ENCODE measurements at regions of chr11 and their contacts with region 1.

Region 1: DNA sequence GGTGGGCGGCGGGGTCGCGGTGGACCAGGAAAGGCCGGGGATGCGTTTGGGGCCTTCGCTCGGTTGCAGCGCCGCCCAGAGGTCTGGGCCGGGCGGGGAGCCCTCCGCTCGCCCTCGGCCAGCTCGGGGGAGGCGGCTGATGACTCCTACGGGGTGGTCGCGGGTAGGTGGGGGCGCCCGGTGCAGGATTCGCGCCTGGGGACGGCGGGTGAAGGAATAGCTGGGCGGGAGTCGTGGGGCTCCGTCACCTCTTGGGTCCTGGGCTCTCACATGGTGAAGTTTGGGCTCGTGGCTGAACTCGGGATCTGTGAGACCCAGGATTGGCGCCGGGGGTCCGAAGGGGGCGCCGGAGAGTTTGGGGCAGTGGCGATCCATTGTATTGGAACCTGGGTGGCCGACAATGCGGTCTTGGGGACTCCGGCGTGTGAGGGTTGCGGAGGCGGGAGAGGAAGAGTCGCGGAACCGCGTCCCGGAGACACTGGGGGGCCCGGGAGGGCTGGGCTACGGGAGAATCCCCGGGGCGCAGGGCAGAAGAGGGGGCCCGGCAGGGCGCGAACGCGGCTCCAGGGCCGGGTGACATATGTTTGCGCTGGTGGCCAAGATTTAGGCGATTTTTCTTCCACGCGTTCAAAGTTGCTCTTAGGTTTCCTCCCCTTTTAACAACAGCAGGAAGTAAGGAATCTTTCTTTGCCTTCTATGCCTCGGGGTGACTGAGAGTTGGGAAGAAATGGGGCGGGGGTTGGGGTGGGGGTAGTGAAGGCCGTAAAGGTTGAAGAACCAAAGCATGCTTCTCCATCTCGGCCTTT is 935 bp downstream of the QSER1 start:
- DNase-seq: no peak
- ATAC-seq: peak; percentile 59
- H3K4me3 ChIP-seq: peak overlapping the region; percentile 91
- H3K27ac ChIP-seq: peak overlapping the region; percentile 87
- H3K4me1 ChIP-seq: peaks cover 7% of the 10 kb centered on the region; the same call in 1 of the 2 replicates
- H3K27me3 ChIP-seq: no peaks in the 10 kb centered on the region
- CTCF ChIP-seq: peak; percentile 43 to 49 (median 45)
- EP300 ChIP-seq: no peak
- POLR2A ChIP-seq: peak; percentile 71; the same call in 1 of the 2 replicates
- RAD21 ChIP-seq: peak; percentile 16; the same call in 1 of the 2 replicates

Region 2: GRCh38 chr11:32658639-32659406 is 234.7 kb before region 1 on chr11:
- CTCF ChIA-PET with region 1: no interaction called
- POLR2A ChIA-PET with region 1: no interaction called
- RAD21 ChIA-PET with region 1: no interaction called
- SMC1A ChIA-PET with region 1: no interaction called
- in situ Hi-C with region 1: no loop called
- intact Hi-C with region 1: no loop called
- DNase-seq: no peak
- ATAC-seq: no peak
- H3K4me3 ChIP-seq: no peak overlapping the region
- H3K27ac ChIP-seq: no peak overlapping the region
- H3K4me1 ChIP-seq: no peaks in the 10 kb centered on the region
- H3K27me3 ChIP-seq: no peaks in the 10 kb centered on the region
- CTCF ChIP-seq: no peak
- EP300 ChIP-seq: no peak
- POLR2A ChIP-seq: no peak
- RAD21 ChIP-seq: no peak

Region 3: GRCh38 chr11:32809313-32809712 is 84.2 kb before region 1 on chr11:
- CTCF ChIA-PET with region 1: interaction called, 41 read pairs
- POLR2A ChIA-PET with region 1: interaction called, 3 read pairs
- RAD21 ChIA-PET with region 1: interaction called, 12 read pairs
- SMC1A ChIA-PET with region 1: interaction called, 19 read pairs
- in situ Hi-C with region 1: no loop called
- intact Hi-C with region 1: no loop called
- DNase-seq: no peak
- ATAC-seq: peak; percentile 100
- H3K4me3 ChIP-seq: no peak overlapping the region
- H3K27ac ChIP-seq: no peak overlapping the region
- H3K4me1 ChIP-seq: no peaks in the 10 kb centered on the region
- H3K27me3 ChIP-seq: no peaks in the 10 kb centered on the region
- CTCF ChIP-seq: peak; percentile 85 to 86 (median 86)
- EP300 ChIP-seq: no peak
- POLR2A ChIP-seq: no peak
- RAD21 ChIP-seq: peak; percentile 83

Region 4: GRCh38 chr11:32829680-32830412 is 63.7 kb before region 1 on chr11 and contains the start of gene PRRG4:
- CTCF ChIA-PET with region 1: interaction called, 3 read pairs
- POLR2A ChIA-PET with region 1: interaction called, 5 read pairs
- RAD21 ChIA-PET with region 1: interaction called, 7 read pairs
- SMC1A ChIA-PET with region 1: interaction called, 5 read pairs
- in situ Hi-C with region 1: no loop called
- intact Hi-C with region 1: loop called (anchors 5 kb)
- DNase-seq: no peak
- ATAC-seq: peak; percentile 90
- H3K4me3 ChIP-seq: peak within 1 kb of the TSS; percentile 84
- H3K27ac ChIP-seq: peak within 1 kb of the TSS; percentile 76
- H3K4me1 ChIP-seq: no peaks in the 10 kb centered on the region; the same call in 1 of the 2 replicates
- H3K27me3 ChIP-seq: no peaks in the 10 kb centered on the region; a peak in 1 of 4 replicates
- CTCF ChIP-seq: no peak
- EP300 ChIP-seq: no peak
- POLR2A ChIP-seq: peak; percentile 72
- RAD21 ChIP-seq: no peak
- polyA plus RNA-seq, gene PRRG4: 1.0 to 1.1 TPM

Region 5: DNA sequence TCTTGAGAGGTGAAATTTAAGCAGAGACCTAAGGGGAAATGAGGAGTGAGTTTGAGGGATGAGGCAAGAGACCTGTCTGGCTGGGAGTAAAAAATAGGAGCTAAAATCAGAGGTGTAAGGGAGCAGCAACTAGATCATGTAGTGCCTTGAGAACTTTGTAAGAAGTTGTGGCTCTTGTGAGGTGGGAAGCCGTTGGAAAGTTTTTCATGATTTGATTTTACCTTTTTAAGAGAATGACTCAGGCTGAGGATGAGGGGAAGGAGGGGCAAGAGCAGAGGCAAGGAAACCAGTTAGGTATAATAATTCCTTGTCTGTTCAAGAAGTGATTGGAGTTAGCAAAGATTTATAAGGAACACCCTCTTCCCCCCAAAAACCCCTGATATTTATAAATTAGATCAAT is 24.9 kb after region 1 on chr11:
- CTCF ChIA-PET with region 1: interaction called, 5 read pairs
- POLR2A ChIA-PET with region 1: interaction called, 4 read pairs
- RAD21 ChIA-PET with region 1: no interaction called
- SMC1A ChIA-PET with region 1: no interaction called
- in situ Hi-C with region 1: no loop called
- intact Hi-C with region 1: loop called (anchors 2 kb)
- DNase-seq: no peak
- ATAC-seq: no peak
- H3K4me3 ChIP-seq: no peak overlapping the region
- H3K27ac ChIP-seq: no peak overlapping the region
- H3K4me1 ChIP-seq: no peaks in the 10 kb centered on the region
- H3K27me3 ChIP-seq: no peaks in the 10 kb centered on the region
- CTCF ChIP-seq: no peak
- EP300 ChIP-seq: no peak
- POLR2A ChIP-seq: no peak
- RAD21 ChIP-seq: no peak

Region 6: DNA sequence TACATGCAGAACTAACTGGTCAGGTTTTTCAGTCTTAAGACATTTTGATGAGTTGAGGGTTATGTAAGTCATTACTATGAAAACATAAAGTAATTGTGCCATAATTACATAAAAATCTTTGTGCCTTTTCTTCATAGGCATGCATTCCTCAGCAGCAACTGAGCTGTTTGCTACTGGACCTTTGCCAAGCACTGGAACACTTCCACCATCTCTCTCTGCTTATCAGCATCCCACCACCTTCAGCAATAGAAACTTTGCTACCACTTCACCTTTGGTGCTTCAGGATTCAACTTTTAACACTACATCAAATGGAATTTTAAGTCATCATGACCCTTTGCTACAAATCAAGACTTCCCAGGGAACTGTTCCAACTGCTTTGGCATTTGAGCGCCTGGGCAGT is 38.1 kb after region 1 on chr11:
- CTCF ChIA-PET with region 1: interaction called, 4 read pairs
- POLR2A ChIA-PET with region 1: interaction called, 3 read pairs
- RAD21 ChIA-PET with region 1: interaction called, 3 read pairs
- SMC1A ChIA-PET with region 1: interaction called, 21 read pairs
- in situ Hi-C with region 1: no loop called
- intact Hi-C with region 1: no loop called
- DNase-seq: no peak
- ATAC-seq: no peak
- H3K4me3 ChIP-seq: no peak overlapping the region
- H3K27ac ChIP-seq: no peak overlapping the region
- H3K4me1 ChIP-seq: no peaks in the 10 kb centered on the region
- H3K27me3 ChIP-seq: no peaks in the 10 kb centered on the region
- CTCF ChIP-seq: no peak
- EP300 ChIP-seq: no peak
- POLR2A ChIP-seq: no peak
- RAD21 ChIP-seq: no peak

Region 7: DNA sequence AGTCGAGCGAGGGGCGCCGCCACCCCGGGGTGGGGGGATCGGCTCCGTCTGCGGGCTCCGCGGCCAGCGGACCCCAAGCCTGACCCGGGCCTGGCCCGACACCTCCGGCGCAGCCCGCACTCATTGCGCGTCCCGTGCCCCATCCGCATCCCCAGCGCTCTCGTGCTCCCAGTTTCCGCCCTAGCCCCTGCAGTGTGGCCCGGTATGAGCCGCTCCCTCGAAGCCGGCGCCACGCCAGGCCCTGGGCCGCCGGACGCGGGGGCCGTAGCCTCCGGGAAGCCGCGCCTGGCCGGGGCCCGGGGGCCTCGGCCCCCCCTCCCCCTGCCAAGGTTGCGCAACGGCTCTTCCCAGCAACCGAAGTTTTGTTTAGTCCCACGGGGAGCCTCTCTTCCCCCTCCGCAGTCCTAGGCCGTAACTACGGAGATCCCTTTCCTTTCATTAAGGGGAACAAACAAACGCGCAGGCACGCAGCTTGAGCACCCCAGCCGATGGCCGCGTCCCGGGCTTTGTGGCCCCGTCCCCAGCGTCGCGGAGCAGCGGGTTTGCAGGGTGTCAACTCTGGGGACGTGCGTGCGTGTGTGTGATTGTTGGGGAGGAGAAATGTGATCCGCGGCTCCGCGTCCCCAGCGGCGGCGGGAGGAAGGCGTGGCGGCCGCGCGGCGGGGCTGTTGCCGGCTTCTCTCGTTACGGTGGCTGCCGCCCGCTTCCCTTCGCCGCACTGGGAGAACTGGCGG is 364.5 kb after region 1 on chr11:
- CTCF ChIA-PET with region 1: no interaction called
- POLR2A ChIA-PET with region 1: no interaction called
- RAD21 ChIA-PET with region 1: no interaction called
- SMC1A ChIA-PET with region 1: interaction called, 3 read pairs
- in situ Hi-C with region 1: no loop called
- intact Hi-C with region 1: loop called (anchors 10 kb)
- DNase-seq: no peak
- ATAC-seq: peak; percentile 62
- H3K4me3 ChIP-seq: peak overlapping the region; percentile 76
- H3K27ac ChIP-seq: peak overlapping the region; percentile 98
- H3K4me1 ChIP-seq: peaks cover 5% of the 10 kb centered on the region; the same call in 1 of the 2 replicates
- H3K27me3 ChIP-seq: no peaks in the 10 kb centered on the region
- CTCF ChIP-seq: peak; percentile 16 to 38 (median 17); a peak in 2 of 6 replicates
- EP300 ChIP-seq: no peak
- POLR2A ChIP-seq: peak; percentile 86
- RAD21 ChIP-seq: no peak

Region 8: DNA sequence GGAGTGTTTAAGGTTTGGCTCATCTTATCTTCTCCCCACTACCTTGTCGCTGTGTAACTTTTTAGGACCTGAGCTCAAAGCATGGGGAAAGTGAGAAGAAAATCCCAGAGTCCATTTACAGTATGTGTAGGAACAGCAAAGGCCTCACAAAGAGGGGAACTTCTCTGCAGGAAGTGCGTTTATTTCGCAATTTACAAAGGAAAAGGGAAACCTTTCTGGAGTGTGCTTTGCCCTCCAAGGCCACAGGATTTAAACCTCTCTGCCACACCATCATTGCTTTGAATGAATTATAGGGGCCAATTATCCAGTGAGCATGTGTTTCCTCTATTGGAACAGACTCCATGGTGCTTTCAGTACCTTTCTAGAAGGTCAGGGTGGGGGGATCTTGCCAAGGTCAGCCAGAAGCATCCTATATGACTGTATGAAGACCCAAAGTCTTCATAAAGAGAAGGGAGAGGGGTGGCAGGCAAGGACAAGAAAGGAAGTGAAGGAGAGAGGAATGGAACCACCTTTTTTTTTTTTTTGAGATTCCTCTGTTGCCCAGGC is 1066.4 kb after region 1 on chr11:
- CTCF ChIA-PET with region 1: no interaction called
- POLR2A ChIA-PET with region 1: no interaction called
- RAD21 ChIA-PET with region 1: no interaction called
- SMC1A ChIA-PET with region 1: no interaction called
- in situ Hi-C with region 1: no loop called
- intact Hi-C with region 1: no loop called
- DNase-seq: no peak
- ATAC-seq: no peak
- H3K4me3 ChIP-seq: no peak overlapping the region
- H3K27ac ChIP-seq: no peak overlapping the region
- H3K4me1 ChIP-seq: no peaks in the 10 kb centered on the region
- H3K27me3 ChIP-seq: no peaks in the 10 kb centered on the region
- CTCF ChIP-seq: no peak
- EP300 ChIP-seq: no peak
- POLR2A ChIP-seq: no peak
- RAD21 ChIP-seq: no peak